ENCODE measurements at regions of chr22 and their contacts with region 1.

Region 1: DNA sequence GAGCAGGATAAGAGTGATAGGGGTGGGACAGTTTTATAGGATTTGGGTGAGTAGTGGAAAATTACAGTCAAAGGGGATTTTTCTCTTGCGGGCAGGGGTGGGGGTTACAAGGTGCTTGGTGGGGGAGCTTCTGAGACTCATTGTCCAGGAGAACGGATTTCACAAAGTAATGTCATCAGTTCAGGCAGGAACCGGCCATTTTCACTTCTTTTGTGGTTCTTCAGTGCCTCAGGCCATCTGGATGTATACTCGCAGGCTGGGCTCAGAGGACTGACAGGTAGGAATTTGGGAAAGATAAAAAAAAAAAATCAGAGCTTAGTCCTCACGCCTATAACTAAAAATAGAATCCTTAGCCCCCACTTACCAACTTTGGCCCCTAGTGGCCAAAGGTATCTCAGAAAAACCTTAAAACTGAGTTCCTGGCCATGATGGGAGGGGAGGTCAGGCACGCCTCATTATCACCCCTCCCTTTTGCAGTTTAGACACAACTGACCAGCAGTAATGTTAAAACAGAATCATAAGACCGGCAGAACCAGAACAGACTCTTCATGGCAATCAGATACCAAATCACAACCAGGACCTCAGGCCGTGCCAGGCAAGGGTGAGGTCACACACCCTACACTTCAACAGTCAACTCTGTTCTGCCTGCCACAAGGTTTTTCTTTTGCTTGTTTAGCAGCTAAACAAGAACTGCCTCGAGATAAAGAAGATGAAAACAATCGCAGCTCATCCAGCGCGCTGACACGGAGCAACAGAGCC is 8.9 kb upstream of the APOBEC3G start:
- DNase-seq: peak; percentile 65
- ATAC-seq: peak; percentile 26
- H3K4me3 ChIP-seq: no peak overlapping the region
- H3K27ac ChIP-seq: peak overlapping the region; percentile 99
- H3K4me1 ChIP-seq: peaks cover 38% of the 10 kb centered on the region
- H3K27me3 ChIP-seq: no peaks in the 10 kb centered on the region
- CTCF ChIP-seq: no peak; the same call in 1 of the 2 replicates

Region 2: GRCh38 chr22:39013942-39014722 is 54.1 kb before region 1 on chr22 and contains the start of gene APOBEC3C:
- CTCF ChIA-PET with region 1: no interaction called
- POLR2A ChIA-PET with region 1: interaction called, 8 read pairs
- intact Hi-C with region 1: loop called (anchors 2 kb)
- DNase-seq: peak; percentile 85
- ATAC-seq: peak; percentile 92
- H3K4me3 ChIP-seq: peak within 1 kb of the TSS; percentile 91
- H3K27ac ChIP-seq: peak within 1 kb of the TSS; percentile 72
- H3K4me1 ChIP-seq: peaks cover 7% of the 10 kb centered on the region; the same call in 1 of the 2 replicates
- H3K27me3 ChIP-seq: no peaks in the 10 kb centered on the region
- CTCF ChIP-seq: peak; percentile 18; the same call in 1 of the 2 replicates
- total RNA-seq, gene APOBEC3C: 35.5 and 37.8 TPM in 2 replicates

Region 3: GRCh38 chr22:39090426-39091064 is 22.3 kb after region 1 on chr22:
- CTCF ChIA-PET with region 1: no interaction called
- POLR2A ChIA-PET with region 1: no interaction called
- intact Hi-C with region 1: loop called (anchors 1 kb)
- DNase-seq: peak; percentile 96
- ATAC-seq: peak; percentile 80
- H3K4me3 ChIP-seq: no peak overlapping the region
- H3K27ac ChIP-seq: peak overlapping the region; percentile 97
- H3K4me1 ChIP-seq: peaks cover 34% of the 10 kb centered on the region
- H3K27me3 ChIP-seq: no peaks in the 10 kb centered on the region
- CTCF ChIP-seq: no peak

Measured in PC-3 (cell line).